CD8-positive, alpha-beta T cell (primary cell): ENCODE measurements at regions of chr5 and their contacts with region 1.

Region 1: GRCh38 chr5:139403787-139404483 is at the start of gene SPATA24:
- DNase-seq: peak; percentile 93 to 99 (median 98)
- ATAC-seq: peak; percentile 88
- H3K4me3 ChIP-seq: peak within 1 kb of the TSS; percentile 61
- H3K4me3 Mint-ChIP-seq: peak within 1 kb of the TSS; percentile 95
- H3K27ac ChIP-seq: peak within 1 kb of the TSS; percentile 68 to 94
- H3K27ac Mint-ChIP-seq: peak within 1 kb of the TSS; percentile 99
- H3K4me1 ChIP-seq: peaks cover 16% of the 10 kb centered on the region
- H3K4me1 Mint-ChIP-seq: peaks cover 32% of the 10 kb centered on the region
- H3K27me3 ChIP-seq: no peaks in the 10 kb centered on the region
- H3K27me3 Mint-ChIP-seq: no peaks in the 10 kb centered on the region
- CTCF ChIP-seq: no peak
- total RNA-seq, gene SPATA24: 2.2 to 3.0 TPM

Region 2: DNA sequence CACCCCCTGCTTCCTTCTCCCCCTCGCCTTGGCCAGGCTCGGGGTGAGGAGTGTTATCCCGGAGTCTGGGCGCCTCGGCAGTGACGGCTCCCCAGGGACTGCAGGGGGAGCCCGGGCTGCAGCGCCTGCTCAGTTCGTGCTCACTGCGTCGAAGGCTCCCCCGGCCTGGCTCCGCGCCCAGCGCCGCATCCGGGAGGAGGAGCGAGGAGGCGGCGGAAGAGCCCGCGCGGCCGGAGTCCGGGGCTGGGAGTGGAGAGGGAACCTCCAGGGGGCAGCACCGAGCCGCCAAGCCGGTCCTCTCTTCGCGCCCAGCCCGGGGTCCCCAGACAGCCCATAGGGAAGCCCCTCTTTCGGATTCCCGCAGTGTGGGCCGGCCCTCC is 939.9 kb before region 1 on chr5:
- CTCF ChIA-PET with region 1: no interaction called
- POLR2A ChIA-PET with region 1: no interaction called
- intact Hi-C with region 1: loop called in 1 of 2 experiments (anchors 5 kb)
- DNase-seq: peak; percentile 85 to 98 (median 93)
- ATAC-seq: peak; percentile 47
- H3K4me3 ChIP-seq: peak overlapping the region; percentile 91 to 97
- H3K4me3 Mint-ChIP-seq: peak overlapping the region; percentile 91
- H3K27ac ChIP-seq: peak overlapping the region; percentile 79 to 100
- H3K27ac Mint-ChIP-seq: peak overlapping the region; percentile 93
- H3K4me1 ChIP-seq: peaks cover 51% of the 10 kb centered on the region
- H3K4me1 Mint-ChIP-seq: peaks cover 48% of the 10 kb centered on the region
- H3K27me3 ChIP-seq: no peaks in the 10 kb centered on the region
- H3K27me3 Mint-ChIP-seq: no peaks in the 10 kb centered on the region
- CTCF ChIP-seq: peak; percentile 87

Region 3: DNA sequence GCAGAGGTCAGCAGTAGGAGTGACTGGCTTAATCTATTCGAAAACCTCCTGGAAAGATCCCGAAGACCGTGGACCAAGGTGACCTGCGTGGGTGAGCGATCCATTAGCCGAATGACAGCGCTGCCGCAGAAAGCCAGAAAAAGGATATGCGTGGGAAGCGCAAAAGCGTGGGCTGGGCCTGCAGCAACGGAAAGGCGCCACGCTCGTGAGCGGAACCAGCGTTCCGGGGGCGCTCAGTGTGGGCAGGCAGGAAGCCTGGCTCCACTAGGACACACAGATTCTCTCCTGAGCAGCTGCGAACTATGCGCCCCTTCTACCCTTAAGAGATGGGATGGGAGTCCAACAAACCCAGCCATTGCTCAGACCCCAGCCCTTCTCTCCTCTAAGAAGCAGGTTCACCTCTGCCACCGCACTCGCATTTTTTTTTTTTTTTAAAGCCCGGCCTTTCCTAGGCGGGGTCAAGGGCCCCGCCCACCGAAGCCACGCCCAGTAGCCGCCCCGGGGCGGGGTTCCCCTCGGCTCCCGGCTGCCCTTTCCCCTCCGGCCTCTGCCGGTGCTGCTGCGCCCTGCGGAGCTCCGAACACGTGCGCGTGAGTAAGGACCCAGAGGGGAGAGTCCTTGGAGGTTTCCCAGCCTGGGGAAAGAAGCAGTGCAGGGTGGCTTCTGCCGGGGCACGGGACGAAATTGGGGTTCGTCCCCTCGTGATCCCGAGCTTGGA is 130.2 kb before region 1 on chr5:
- CTCF ChIA-PET with region 1: no interaction called
- POLR2A ChIA-PET with region 1: no interaction called
- intact Hi-C with region 1: loop called in 1 of 2 experiments (anchors 5 kb)
- DNase-seq: peak; percentile 73 to 91 (median 83)
- ATAC-seq: peak; percentile 90
- H3K4me3 ChIP-seq: peak overlapping the region; percentile 81 to 86
- H3K4me3 Mint-ChIP-seq: peak overlapping the region; percentile 88
- H3K27ac ChIP-seq: peak overlapping the region; percentile 56 to 57
- H3K27ac Mint-ChIP-seq: peak overlapping the region; percentile 72
- H3K4me1 ChIP-seq: peaks cover 36% of the 10 kb centered on the region
- H3K4me1 Mint-ChIP-seq: peaks cover 50% of the 10 kb centered on the region
- H3K27me3 ChIP-seq: no peaks in the 10 kb centered on the region
- H3K27me3 Mint-ChIP-seq: no peaks in the 10 kb centered on the region
- CTCF ChIP-seq: no peak

Region 4: GRCh38 chr5:139378941-139379361 is 25.0 kb before region 1 on chr5:
- CTCF ChIA-PET with region 1: no interaction called
- POLR2A ChIA-PET with region 1: no interaction called
- intact Hi-C with region 1: no loop called
- DNase-seq: no peak
- ATAC-seq: no peak
- H3K4me3 ChIP-seq: no peak overlapping the region
- H3K4me3 Mint-ChIP-seq: no peak overlapping the region
- H3K27ac ChIP-seq: no peak overlapping the region
- H3K27ac Mint-ChIP-seq: no peak overlapping the region
- H3K4me1 ChIP-seq: no peaks in the 10 kb centered on the region
- H3K4me1 Mint-ChIP-seq: peaks cover 3% of the 10 kb centered on the region
- H3K27me3 ChIP-seq: no peaks in the 10 kb centered on the region
- H3K27me3 Mint-ChIP-seq: no peaks in the 10 kb centered on the region
- CTCF ChIP-seq: no peak

Region 5: GRCh38 chr5:139392678-139393496 is 11.0 kb before region 1 on chr5:
- CTCF ChIA-PET with region 1: interaction called, 4 read pairs
- POLR2A ChIA-PET with region 1: interaction called, 6 read pairs
- intact Hi-C with region 1: loop called in 1 of 2 experiments (anchors 1 kb)
- DNase-seq: peak; percentile 48 to 88 (median 75)
- ATAC-seq: peak; percentile 62
- H3K4me3 ChIP-seq: peak overlapping the region; percentile 72 to 84
- H3K4me3 Mint-ChIP-seq: peak overlapping the region; percentile 90
- H3K27ac ChIP-seq: peak overlapping the region in 1 of 2 experiments; percentile 29
- H3K27ac Mint-ChIP-seq: peak overlapping the region; percentile 60
- H3K4me1 ChIP-seq: peaks cover 44% of the 10 kb centered on the region
- H3K4me1 Mint-ChIP-seq: peaks cover 42% of the 10 kb centered on the region
- H3K27me3 ChIP-seq: no peaks in the 10 kb centered on the region
- H3K27me3 Mint-ChIP-seq: no peaks in the 10 kb centered on the region
- CTCF ChIP-seq: peak; percentile 62

Region 6: DNA sequence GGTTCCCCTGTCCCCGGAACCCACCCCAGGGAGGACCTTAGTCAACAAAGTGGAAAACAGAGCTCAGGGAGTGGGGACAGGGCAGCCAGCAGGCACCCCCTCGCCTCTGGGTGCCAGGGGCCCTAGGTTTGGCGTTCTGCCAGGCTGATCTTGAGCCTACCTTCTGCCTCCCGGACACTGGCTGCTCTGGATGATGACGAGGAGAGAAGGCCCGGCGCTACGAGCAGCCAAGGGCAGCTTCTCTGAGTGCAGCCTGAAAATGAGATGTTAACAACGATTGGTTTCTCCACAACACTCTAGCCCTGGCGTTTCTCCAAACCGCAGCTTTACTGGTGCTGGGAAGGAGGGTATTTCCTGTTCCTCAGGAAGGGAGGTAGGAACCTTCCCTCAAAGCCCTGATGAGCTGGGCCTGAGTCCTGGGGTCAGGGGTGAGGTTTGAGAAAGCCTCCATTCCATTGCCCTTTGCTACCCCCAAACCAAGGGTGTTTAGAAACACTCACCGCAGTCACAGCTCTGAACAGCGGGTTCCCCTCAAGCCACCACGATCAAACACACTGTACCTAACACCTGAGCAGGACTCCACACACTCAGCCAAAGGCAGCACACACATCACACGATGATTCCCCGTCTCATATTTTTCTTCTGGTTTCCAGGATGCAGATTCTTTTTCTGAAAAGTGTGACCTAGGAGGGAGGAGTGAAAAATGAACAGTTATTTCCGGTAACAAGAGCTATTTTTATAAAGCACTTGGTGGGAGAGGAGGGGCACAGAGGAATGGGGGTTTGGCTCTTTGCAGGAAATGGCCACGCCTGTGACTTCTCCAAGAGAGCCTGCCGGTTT is 78.3 kb after region 1 on chr5 and contains the start of gene STING1:
- CTCF ChIA-PET with region 1: interaction called, 3 read pairs
- POLR2A ChIA-PET with region 1: interaction called, 4 read pairs
- intact Hi-C with region 1: loop called in 1 of 2 experiments (anchors 1 kb)
- DNase-seq: peak; percentile 22 to 89 (median 73)
- ATAC-seq: peak; percentile 78
- H3K4me3 ChIP-seq: peak within 1 kb of the TSS; percentile 56 to 61
- H3K4me3 Mint-ChIP-seq: peak within 1 kb of the TSS; percentile 90
- H3K27ac ChIP-seq: peak within 1 kb of the TSS; percentile 58 to 84
- H3K27ac Mint-ChIP-seq: peak within 1 kb of the TSS; percentile 97
- H3K4me1 ChIP-seq: peaks cover 26% of the 10 kb centered on the region
- H3K4me1 Mint-ChIP-seq: peaks cover 34% of the 10 kb centered on the region
- H3K27me3 ChIP-seq: no peaks in the 10 kb centered on the region
- H3K27me3 Mint-ChIP-seq: no peaks in the 10 kb centered on the region
- CTCF ChIP-seq: no peak
- total RNA-seq, gene STING1: 55.0 to 57.8 TPM

Region 7: DNA sequence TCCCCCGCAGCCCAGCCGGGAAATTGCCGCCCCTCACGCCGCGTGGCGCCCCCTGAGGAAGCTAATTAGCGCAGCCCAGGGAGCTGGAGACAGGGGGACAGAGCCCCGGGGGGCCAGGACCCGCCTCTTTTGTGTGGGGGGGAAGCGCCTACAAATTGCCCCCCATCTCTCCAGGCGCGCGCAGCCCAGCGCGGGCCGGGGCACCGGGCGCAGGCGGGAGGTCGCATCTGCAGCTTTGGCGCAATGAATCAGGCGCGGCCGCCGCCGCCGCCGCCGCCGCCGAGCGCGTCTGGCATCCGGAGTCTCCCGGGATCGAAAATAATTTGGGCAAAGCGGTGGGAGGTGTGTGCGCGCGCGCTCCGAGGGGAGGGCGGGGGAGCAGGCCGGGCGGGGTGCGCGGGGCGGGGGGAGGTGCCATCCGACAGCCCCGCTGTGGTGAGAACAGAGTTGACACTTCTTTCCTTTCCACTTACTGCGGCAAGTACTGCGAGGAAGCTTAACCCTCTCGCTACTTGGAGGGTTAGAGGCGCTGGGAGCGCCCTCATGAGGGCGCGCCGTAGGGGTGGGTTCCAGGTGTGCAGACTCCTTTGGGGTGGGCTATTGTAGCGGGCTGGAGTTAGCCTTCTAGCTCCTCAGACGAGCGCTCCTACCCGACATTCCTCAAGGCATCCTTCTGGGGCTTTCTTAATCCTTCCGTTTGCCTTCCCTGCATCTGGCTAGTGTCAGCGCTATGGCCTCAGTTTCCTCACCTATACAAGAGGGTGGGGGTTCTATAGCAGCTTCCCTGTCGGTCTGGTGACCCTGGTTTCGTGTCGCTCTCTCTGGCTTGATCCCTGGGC is 307.4 kb after region 1 on chr5:
- CTCF ChIA-PET with region 1: no interaction called
- POLR2A ChIA-PET with region 1: interaction called, 3 read pairs
- intact Hi-C with region 1: loop called in 1 of 2 experiments (anchors 1 kb)
- DNase-seq: peak; percentile 32 to 90 (median 71)
- ATAC-seq: peak; percentile 60
- H3K4me3 ChIP-seq: peak overlapping the region; percentile 63 to 64
- H3K4me3 Mint-ChIP-seq: peak overlapping the region; percentile 77
- H3K27ac ChIP-seq: peak overlapping the region; percentile 66 to 84
- H3K27ac Mint-ChIP-seq: no peak overlapping the region
- H3K4me1 ChIP-seq: peaks cover 28% of the 10 kb centered on the region
- H3K4me1 Mint-ChIP-seq: peaks cover 39% of the 10 kb centered on the region
- H3K27me3 ChIP-seq: no peaks in the 10 kb centered on the region
- H3K27me3 Mint-ChIP-seq: no peaks in the 10 kb centered on the region
- CTCF ChIP-seq: no peak